ENCODE measurements at regions of chr13 and their contacts with region 1.

Region 1: GRCh38 chr13:44212633-44213403 is 160.8 kb upstream of the SERP2 start:
- DNase-seq: no peak
- H3K4me3 ChIP-seq: no peak overlapping the region
- H3K27me3 ChIP-seq: peaks cover 13% of the 10 kb centered on the region
- CTCF ChIP-seq: no peak

Region 2: GRCh38 chr13:44583137-44583536 is 370.3 kb after region 1 on chr13:
- CTCF ChIA-PET with region 1: no interaction called
- POLR2A ChIA-PET with region 1: interaction called, 11 read pairs
- DNase-seq: no peak
- H3K4me3 ChIP-seq: no peak overlapping the region
- H3K27me3 ChIP-seq: no peaks in the 10 kb centered on the region
- CTCF ChIP-seq: no peak

Measured in BJ (cell line).